Caco-2 (cell line): ENCODE measurements at regions of chr20 and their contacts with region 1.

Region 1: DNA sequence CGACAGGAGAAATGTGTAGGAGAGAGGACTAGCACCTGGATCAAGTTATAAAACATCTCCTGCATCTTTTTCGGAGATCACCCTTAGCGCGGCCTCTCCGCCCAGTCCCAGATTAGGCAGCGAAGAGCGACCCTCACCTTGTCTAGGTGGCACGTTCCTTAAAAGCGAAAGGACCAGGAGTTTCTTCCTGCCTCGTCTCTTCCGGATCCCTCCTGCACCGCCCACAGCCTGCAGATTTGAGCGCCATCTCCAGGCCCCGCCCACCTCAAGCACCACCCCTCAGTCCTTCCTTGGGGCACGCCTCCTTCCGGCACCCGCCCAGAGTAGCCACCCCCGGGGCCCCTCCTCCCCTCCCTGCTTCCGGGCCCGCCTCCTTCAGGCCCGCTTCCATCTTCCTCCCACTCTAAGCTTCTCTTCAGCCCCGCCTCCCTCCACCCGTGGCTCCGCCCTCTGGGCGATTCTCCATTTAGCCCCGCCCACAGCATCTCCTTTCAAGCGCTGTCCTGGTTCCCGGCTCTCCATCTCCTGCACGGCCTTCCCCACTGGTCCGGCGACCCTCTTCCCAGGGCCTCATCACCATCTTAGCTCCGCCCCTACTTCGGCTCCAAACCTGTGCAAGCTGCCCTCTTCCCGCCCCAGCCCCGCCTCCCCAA is 662 bp upstream of the RALY start:
- DNase-seq: peak; percentile 100
- H3K4me3 ChIP-seq: peak overlapping the region; percentile 88
- H3K4me3 Mint-ChIP-seq: peak overlapping the region; percentile 76
- H3K27ac Mint-ChIP-seq: peak overlapping the region; percentile 89
- H3K4me1 ChIP-seq: peaks cover 17% of the 10 kb centered on the region
- H3K4me1 Mint-ChIP-seq: peaks cover 3% of the 10 kb centered on the region
- H3K27me3 ChIP-seq: no peaks in the 10 kb centered on the region
- H3K27me3 Mint-ChIP-seq: no peaks in the 10 kb centered on the region
- CTCF ChIP-seq: no peak

Region 2: DNA sequence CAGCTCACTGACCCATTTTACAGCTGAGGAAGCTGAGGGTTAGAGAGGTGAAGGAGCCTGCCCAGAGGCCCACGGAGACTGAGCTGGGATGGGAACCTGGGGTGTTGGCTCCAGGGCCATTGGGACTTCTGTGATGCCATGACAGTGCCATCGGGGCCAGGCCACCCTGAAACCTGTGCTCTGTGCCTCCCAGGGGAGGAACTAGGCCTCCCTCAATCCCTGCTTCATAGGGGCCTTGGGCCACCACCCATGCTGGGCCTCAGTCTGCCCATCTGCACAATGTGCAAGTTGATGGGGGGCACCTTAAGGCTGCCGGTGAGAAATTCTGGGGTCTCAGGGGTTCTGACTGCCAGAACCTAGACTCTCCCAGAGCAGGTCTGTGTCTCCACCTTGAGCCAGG is 888.7 kb before region 1 on chr20:
- CTCF ChIA-PET with region 1: interaction called, 11 read pairs
- POLR2A ChIA-PET with region 1: no interaction called
- intact Hi-C with region 1: no loop called
- DNase-seq: no peak
- H3K4me3 ChIP-seq: no peak overlapping the region
- H3K4me3 Mint-ChIP-seq: no peak overlapping the region
- H3K27ac Mint-ChIP-seq: no peak overlapping the region
- H3K4me1 ChIP-seq: peaks cover 16% of the 10 kb centered on the region
- H3K4me1 Mint-ChIP-seq: peaks cover 16% of the 10 kb centered on the region
- H3K27me3 ChIP-seq: no peaks in the 10 kb centered on the region
- H3K27me3 Mint-ChIP-seq: peaks cover 5% of the 10 kb centered on the region
- CTCF ChIP-seq: no peak

Region 3: DNA sequence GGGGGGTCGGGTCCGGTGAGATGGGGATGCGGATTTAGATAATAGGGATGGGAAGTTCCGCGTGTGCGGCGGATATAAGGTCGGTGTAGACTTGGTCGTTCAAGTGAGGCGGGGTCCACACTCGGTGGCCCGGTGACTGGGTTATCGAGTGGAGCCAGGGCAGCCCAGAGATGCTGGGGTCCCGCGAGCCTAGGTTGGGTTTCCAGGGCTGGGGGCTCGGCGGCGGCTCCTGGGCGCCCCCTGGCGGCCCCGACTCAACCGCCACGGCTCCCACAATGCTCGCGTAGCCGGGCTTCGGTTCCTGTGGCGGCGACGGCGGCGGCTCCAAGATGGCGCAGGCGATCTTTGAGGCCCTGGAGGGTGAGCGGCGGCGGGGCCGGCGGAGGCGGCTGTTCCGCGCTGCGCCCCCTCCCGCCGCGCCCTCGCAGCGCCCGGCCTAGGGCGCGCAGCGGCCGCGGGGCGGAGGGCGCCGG is 261.3 kb before region 1 on chr20 and contains the start of gene ZNF341:
- CTCF ChIA-PET with region 1: no interaction called
- POLR2A ChIA-PET with region 1: interaction called, 10 read pairs
- intact Hi-C with region 1: loop called (anchors 2 kb)
- DNase-seq: peak in 1 of 2 experiments; percentile 97
- H3K4me3 ChIP-seq: peak within 1 kb of the TSS; percentile 72
- H3K4me3 Mint-ChIP-seq: peak within 1 kb of the TSS; percentile 94
- H3K27ac Mint-ChIP-seq: peak within 1 kb of the TSS; percentile 88
- H3K4me1 ChIP-seq: peaks cover 23% of the 10 kb centered on the region
- H3K4me1 Mint-ChIP-seq: peaks cover 27% of the 10 kb centered on the region
- H3K27me3 ChIP-seq: no peaks in the 10 kb centered on the region
- H3K27me3 Mint-ChIP-seq: no peaks in the 10 kb centered on the region
- CTCF ChIP-seq: peak; percentile 96 to 99
- total RNA-seq, gene ZNF341: 2.9 and 4.6 TPM in 2 replicates

Region 4: GRCh38 chr20:33826270-33826897 is 166.7 kb before region 1 on chr20:
- CTCF ChIA-PET with region 1: interaction called, 4 read pairs
- POLR2A ChIA-PET with region 1: interaction called, 20 read pairs
- intact Hi-C with region 1: no loop called
- DNase-seq: peak; percentile 92 to 94
- H3K4me3 ChIP-seq: peak overlapping the region; percentile 1; the same call in 1 of the 2 replicates
- H3K4me3 Mint-ChIP-seq: peak overlapping the region; percentile 43
- H3K27ac Mint-ChIP-seq: peak overlapping the region; percentile 80
- H3K4me1 ChIP-seq: peaks cover 55% of the 10 kb centered on the region
- H3K4me1 Mint-ChIP-seq: peaks cover 58% of the 10 kb centered on the region
- H3K27me3 ChIP-seq: no peaks in the 10 kb centered on the region
- H3K27me3 Mint-ChIP-seq: no peaks in the 10 kb centered on the region
- CTCF ChIP-seq: no peak

Region 5: DNA sequence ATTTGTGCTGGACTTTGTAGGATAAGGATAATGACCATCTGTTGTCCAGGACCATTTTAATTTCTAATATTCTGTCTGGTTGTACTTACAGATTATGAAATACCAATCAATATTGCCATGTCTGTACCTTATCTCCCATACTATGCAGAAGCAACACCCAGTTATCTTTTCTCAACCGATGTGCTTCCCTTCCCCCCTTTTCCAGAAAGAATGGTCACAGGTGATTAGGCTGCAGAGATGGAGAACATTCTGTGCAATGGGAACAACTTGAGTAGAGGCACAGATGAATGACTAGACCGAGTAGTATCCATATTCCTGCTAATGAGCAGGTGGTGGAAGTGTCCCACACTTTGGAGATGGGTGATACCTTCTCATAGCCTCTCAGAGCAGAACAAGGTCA is 11.2 kb after region 1 on chr20:
- CTCF ChIA-PET with region 1: interaction called, 7 read pairs
- POLR2A ChIA-PET with region 1: interaction called, 20 read pairs
- intact Hi-C with region 1: no loop called
- DNase-seq: no peak
- H3K4me3 ChIP-seq: no peak overlapping the region
- H3K4me3 Mint-ChIP-seq: no peak overlapping the region
- H3K27ac Mint-ChIP-seq: no peak overlapping the region
- H3K4me1 ChIP-seq: peaks cover 35% of the 10 kb centered on the region
- H3K4me1 Mint-ChIP-seq: peaks cover 41% of the 10 kb centered on the region
- H3K27me3 ChIP-seq: no peaks in the 10 kb centered on the region
- H3K27me3 Mint-ChIP-seq: no peaks in the 10 kb centered on the region
- CTCF ChIP-seq: no peak

Region 6: GRCh38 chr20:34111702-34112599 is 118.9 kb after region 1 on chr20 and contains the start of gene EIF2S2:
- CTCF ChIA-PET with region 1: interaction called, 7 read pairs
- POLR2A ChIA-PET with region 1: interaction called, 61 read pairs
- intact Hi-C with region 1: loop called (anchors 1 kb)
- DNase-seq: peak; percentile 100
- H3K4me3 ChIP-seq: peak within 1 kb of the TSS; percentile 98
- H3K4me3 Mint-ChIP-seq: peak within 1 kb of the TSS; percentile 77
- H3K27ac Mint-ChIP-seq: peak within 1 kb of the TSS; percentile 99
- H3K4me1 ChIP-seq: peaks cover 8% of the 10 kb centered on the region
- H3K4me1 Mint-ChIP-seq: peaks cover 37% of the 10 kb centered on the region
- H3K27me3 ChIP-seq: no peaks in the 10 kb centered on the region
- H3K27me3 Mint-ChIP-seq: no peaks in the 10 kb centered on the region
- CTCF ChIP-seq: no peak
- total RNA-seq, gene EIF2S2: 291 and 299 TPM in 2 replicates